GM10248 (cell line): ENCODE measurements at regions of chr4 and their contacts with region 1.

Region 1: DNA sequence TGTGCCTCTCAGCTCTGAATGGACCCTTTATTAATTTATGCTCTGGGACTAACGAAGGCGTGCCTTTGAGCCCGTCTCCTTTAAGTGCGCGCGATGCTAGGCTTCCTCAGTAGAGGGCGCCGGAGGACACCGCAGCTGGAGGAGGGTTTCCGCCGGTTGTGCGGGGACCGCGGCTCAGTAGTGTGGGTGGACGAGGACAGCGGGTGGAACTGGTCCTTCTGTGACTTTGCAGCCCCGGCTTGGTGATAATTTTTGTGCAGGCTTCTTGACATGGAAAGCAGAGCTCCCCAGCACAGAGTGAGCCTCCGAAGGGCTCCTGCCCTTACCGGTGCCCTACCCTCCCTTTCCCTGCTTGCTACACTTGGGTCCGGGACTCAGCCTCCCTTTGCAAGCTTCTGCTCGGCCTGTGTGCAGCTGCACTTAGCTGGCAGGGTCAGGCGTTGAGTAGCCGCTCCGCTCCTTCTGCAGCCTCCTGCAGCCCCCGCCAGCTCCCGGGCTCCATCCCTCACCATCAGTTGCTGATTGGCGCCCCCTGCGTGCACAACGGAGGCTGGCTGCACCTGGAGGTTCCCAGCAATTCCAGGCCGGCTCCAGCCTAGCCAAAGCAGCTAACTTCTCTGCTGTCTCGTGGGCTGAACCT is 26.8 kb upstream of the BOD1L1 start:
- DNase-seq: peak; percentile 77
- CTCF ChIP-seq: peak; percentile 94

Region 2: DNA sequence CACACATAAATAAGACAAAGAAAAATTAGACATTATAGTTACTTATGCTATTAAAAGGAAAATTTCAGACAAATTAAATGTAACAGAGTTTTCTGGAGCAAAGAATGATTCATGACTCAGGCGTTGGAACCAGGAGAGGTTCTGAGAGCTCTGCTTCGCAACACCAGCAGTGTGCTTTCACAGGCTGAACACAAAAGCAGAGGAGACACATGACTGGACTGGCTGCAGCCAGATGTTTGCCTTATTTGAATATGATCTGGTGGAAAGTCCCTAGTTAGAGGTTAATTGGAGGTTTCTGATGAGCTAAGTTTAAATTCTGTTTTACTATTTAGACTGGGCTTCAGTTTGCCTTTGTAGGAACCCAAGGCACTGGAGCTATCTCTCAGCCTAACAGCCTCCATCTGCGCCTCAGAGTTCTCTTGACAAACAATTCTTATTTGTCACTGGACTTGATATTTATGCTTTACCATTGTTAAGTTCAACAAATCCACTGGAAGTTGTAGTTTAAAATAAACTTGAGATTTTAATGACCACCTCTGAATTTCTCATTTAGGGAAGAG is 42.9 kb before region 1 on chr4:
- CTCF ChIA-PET with region 1: interaction called, 13 read pairs
- POLR2A ChIA-PET with region 1: no interaction called
- DNase-seq: peak; percentile 46
- CTCF ChIP-seq: no peak

Region 3: GRCh38 chr4:13640149-13640940 is 13.9 kb before region 1 on chr4:
- CTCF ChIA-PET with region 1: interaction called, 101 read pairs
- POLR2A ChIA-PET with region 1: interaction called, 4 read pairs
- DNase-seq: no peak
- CTCF ChIP-seq: no peak

Region 4: DNA sequence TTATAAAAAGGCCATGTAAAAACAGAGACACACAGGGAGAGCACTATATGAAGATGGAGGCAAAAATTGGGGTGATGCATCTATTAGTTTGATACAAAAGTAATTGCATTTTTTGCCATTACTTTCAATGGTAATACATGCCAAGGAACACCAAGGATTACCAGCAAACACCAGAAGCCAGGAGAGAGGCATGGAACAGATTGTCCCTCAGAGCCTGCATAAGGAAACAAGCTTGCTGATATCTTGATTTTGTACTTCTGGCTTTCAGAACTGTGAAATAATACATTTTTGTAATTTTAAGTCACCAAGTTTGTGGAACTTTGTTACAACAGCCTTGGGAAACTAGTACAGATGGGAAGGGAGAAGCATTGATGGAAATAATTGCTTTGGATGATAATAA is 18.9 kb after region 1 on chr4:
- CTCF ChIA-PET with region 1: interaction called, 17 read pairs
- POLR2A ChIA-PET with region 1: no interaction called
- DNase-seq: no peak
- CTCF ChIP-seq: no peak

Region 5: GRCh38 chr4:15396157-15396800 is 1742.0 kb after region 1 on chr4:
- CTCF ChIA-PET with region 1: interaction called, 15 read pairs
- POLR2A ChIA-PET with region 1: no interaction called
- DNase-seq: peak; percentile 56
- CTCF ChIP-seq: peak; percentile 63